Sigmoid colon (tissue), 7 donors: ENCODE measurements at regions of chr2 and their contacts with region 1.

Region 1: DNA sequence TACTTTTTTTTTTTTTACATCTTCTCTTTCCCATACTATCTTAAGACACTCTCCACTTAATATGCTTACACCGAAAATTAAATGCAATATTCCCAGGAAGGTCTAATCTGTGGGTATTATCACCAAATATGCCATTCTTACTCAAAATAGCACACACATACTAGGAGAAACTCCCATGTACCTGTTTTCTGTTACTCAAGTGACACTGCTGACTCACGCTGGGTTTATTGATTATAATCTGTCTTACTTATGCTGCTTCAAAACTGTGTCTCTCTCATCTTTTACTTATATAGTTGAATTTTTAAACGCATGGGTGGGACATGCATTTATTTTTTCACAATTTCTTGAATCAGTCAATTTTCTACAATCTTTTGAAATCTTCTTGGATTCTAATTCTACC is 29.9 kb downstream of the MRPL19 start:
- DNase-seq: no peak
- H3K4me3 ChIP-seq: no peak overlapping the region
- H3K27ac ChIP-seq: no peak overlapping the region
- H3K4me1 ChIP-seq: peaks cover 0 to 8% (median 0%) of the 10 kb centered on the region in 4 donors
- H3K27me3 ChIP-seq: no peaks in the 10 kb centered on the region
- CTCF ChIP-seq: no peak
- EP300 ChIP-seq: no peak
- POLR2A ChIP-seq: no peak

Region 2: GRCh38 chr2:75608684-75609333 is 67.7 kb before region 1 on chr2:
- intact Hi-C with region 1: no loop called
- DNase-seq: no peak
- H3K4me3 ChIP-seq: no peak overlapping the region
- H3K27ac ChIP-seq: no peak overlapping the region
- H3K4me1 ChIP-seq: peaks cover 0 to 5% (median 1%) of the 10 kb centered on the region in 4 donors
- H3K27me3 ChIP-seq: peaks cover 0 to 22% (median 0%) of the 10 kb centered on the region in 3 donors
- CTCF ChIP-seq: peak in 3 of 4 experiments; percentile 39 to 75 (median 45)
- EP300 ChIP-seq: no peak
- POLR2A ChIP-seq: no peak

Region 3: DNA sequence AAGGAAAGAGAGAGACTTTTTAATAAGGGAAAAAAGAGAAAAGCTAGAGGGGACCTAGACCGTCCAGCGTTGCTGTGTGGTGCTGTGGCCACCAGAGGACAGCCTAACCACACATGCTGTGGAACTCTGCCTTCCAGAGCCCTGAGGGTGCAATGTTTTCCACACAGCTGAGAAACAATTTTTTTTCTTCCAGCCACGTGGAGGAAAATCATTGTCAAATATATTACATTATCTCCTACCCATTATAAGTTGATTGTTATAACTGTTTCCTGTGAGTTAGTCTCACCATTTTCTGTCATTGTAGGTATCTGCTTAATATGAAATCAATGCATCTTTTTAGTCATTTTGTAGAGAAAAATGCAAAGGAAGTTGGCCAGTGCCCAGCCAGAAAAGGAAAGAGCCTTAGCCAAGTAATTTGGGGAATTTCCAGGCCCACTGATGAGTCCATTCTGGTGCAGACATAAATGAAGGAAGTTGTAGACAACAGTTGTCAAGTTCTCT is 35.8 kb before region 1 on chr2:
- intact Hi-C with region 1: loop called (anchors 1 kb)
- DNase-seq: peak; percentile 72
- H3K4me3 ChIP-seq: no peak overlapping the region
- H3K27ac ChIP-seq: peak overlapping the region in 2 of 4 donors; percentile 1 to 48
- H3K4me1 ChIP-seq: peaks cover 0 to 7% (median 2%) of the 10 kb centered on the region in 4 donors
- H3K27me3 ChIP-seq: no peaks in the 10 kb centered on the region
- CTCF ChIP-seq: peak; percentile 84 to 97 (median 91)
- EP300 ChIP-seq: no peak
- POLR2A ChIP-seq: no peak